Adrenal gland (tissue), 19 donors: ENCODE measurements at regions of chr12 and their contacts with region 1.

Region 1: DNA sequence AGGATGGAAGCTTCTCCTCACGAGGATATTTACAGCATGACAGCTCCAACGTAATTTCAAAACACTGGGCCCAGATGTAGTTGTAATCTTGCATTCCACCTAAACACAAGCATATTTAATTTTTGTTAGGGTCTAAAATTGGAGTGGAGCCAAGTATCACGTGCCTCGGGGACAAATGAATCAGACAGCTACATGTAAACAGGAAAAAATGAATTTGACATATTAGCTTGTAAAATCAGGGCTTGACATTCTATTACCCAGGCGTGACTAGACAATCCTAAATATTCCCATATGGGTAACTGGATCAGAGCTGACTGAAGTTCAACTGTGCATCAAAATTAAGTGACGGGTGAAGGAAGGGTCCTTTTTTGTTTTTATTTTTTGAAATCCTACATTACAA is 59.0 kb downstream of the MDM2 start:
- DNase-seq: no peak
- H3K4me3 ChIP-seq: no peak overlapping the region
- H3K27ac ChIP-seq: no peak overlapping the region
- H3K4me1 ChIP-seq: no peaks in the 10 kb centered on the region
- H3K27me3 ChIP-seq: no peaks in the 10 kb centered on the region
- CTCF ChIP-seq: no peak
- POLR2A ChIP-seq: no peak

Region 2: DNA sequence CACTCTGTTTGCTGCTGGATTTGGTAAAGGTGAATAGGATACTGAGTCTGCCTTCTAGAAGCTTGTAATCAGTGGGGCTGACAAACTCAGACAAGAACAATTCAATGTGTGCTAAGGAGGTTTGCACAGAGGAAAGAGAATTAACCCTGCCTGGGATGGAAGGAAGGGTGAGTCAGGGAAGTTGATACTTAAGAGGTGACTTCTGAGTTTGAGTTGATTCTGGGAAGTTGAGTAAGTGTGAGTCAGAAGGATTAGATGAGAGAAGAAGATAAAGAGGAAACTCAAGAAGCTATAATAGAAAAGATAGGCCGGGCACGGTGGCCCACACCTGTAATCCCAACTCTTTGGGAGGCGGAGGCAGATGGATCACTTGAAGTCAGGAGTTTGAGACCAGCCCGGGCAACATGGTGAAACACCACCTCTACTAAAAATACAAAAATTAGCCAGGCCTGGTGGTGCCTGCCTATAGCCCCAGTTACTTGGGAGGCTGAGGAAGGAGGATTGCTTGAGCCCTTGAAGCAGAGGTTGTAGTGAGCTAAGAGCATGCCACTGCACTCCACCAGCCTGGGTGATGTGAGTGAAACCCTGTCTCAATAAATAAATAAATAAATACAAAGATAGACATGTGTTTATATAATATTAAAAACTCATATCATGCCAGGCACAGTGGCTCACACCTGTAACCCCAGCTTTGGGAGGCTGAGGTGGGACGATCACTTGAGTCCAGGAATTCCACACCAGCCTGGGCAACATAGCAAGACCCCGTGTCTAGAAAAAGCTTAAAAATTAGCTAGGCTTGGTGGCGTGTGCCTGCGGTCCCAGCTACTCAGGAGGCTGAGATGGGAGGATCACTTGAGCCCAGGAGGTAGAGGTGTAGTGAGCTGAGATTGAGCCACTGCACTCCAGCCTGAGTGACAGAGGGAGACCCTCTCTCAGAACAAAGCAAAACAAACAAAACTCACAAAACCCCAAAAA is 192.8 kb after region 1 on chr12:
- intact Hi-C with region 1: loop called in 1 of 2 experiments (anchors 10 kb)
- DNase-seq: no peak
- H3K4me3 ChIP-seq: no peak overlapping the region
- H3K27ac ChIP-seq: no peak overlapping the region
- H3K4me1 ChIP-seq: no peaks in the 10 kb centered on the region
- H3K27me3 ChIP-seq: no peaks in the 10 kb centered on the region
- CTCF ChIP-seq: no peak
- POLR2A ChIP-seq: no peak

Region 3: DNA sequence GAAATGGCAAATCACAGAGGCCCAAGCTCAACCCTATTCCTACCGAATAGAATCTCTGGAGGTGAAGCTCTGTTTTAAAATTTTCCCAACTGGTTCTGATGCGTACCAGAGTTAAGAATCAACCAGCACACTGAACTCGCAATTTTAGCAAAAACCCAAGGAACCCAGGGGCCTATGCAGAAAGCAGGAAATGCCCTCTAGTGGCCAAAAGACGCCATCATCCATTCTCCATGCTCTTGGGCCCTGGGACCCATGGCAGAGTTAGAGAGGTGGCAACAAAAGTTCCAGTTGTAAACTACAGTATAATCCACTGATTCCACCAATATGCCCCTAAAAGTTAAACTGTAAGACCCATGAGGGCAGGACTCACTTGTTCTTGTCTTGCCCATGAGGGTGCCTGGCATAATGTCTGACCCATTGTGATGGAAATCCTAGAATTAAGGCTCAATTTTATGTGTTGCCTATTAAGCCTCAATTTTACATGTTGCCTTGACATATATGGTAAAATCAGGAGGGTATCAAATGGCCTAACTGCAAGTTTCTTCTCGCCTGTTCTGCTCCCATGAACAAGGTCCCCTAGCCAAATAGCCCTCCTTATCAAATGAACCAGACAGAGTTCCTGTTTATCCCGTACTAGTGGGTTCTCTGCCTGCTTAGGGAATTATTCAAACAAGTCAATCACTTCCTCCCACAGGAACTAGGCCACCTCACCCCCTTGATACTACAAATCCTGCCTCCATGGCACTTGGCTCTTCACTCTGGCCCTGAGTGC is 203.6 kb after region 1 on chr12:
- intact Hi-C with region 1: loop called (anchors 5 to 10 kb)
- DNase-seq: peak; percentile 65 to 87 (median 76)
- H3K4me3 ChIP-seq: no peak overlapping the region
- H3K27ac ChIP-seq: no peak overlapping the region
- H3K4me1 ChIP-seq: no peaks in the 10 kb centered on the region
- H3K27me3 ChIP-seq: no peaks in the 10 kb centered on the region
- CTCF ChIP-seq: peak; percentile 80 to 89 (median 85)
- POLR2A ChIP-seq: no peak

Region 4: DNA sequence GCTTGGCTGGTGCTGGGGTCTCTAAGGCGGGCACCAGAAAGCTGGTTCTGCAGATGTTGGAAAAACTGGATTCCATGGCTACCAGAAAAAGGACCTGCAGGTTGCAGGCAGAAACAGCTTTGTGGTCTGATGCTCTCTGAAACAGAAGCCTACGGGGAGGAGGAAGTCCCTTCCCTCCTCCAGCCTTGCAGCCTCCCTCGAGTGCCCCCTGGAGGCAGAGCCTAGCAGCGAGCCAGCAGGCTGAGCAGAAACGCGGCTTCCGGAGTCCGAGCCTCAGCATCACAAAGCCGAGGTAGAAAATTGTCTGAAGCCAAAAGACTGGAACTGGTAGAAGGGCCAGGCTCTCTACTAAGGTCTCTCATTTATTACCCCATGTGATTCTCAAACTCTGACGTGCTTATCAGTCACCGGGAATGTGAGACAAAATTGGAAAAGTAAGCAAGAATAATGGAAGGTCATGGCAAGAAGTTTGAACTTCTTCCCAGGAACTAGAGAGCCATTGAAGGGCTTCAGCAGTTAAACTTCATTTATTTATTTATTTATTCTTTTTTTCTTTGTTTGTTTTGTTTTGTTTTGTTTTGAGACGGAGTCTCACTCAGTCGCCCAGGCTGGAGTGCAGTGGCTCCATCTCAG is 290.2 kb after region 1 on chr12:
- intact Hi-C with region 1: loop called in 1 of 2 experiments (anchors 10 kb)
- DNase-seq: peak; percentile 86 to 93 (median 89)
- H3K4me3 ChIP-seq: peak overlapping the region in 1 of 4 donors; percentile 5
- H3K27ac ChIP-seq: no peak overlapping the region
- H3K4me1 ChIP-seq: peaks cover 13 to 17% of the 10 kb centered on the region in 2 donors
- H3K27me3 ChIP-seq: no peaks in the 10 kb centered on the region
- CTCF ChIP-seq: peak; percentile 68 to 94 (median 80)
- POLR2A ChIP-seq: no peak